ENCODE measurements at regions of chr22 and their contacts with region 1.

Region 1: GRCh38 chr22:37077884-37078485 is 26.4 kb downstream of the KCTD17 start:
- DNase-seq: no peak
- ATAC-seq: peak; percentile 91
- H3K4me3 ChIP-seq: no peak overlapping the region
- H3K27ac ChIP-seq: no peak overlapping the region
- H3K4me1 ChIP-seq: peaks cover 10% of the 10 kb centered on the region
- H3K27me3 ChIP-seq: peaks cover 0 to 3% of the 10 kb centered on the region in 2 experiments; a peak in 2 of 4 replicates
- CTCF ChIP-seq: peak; percentile 96 to 99 (median 98)
- EP300 ChIP-seq: no peak
- POLR2A ChIP-seq: no peak
- RAD21 ChIP-seq: peak; percentile 85

Region 2: GRCh38 chr22:36713436-36713835 is 364.5 kb before region 1 on chr22:
- CTCF ChIA-PET with region 1: no interaction called
- POLR2A ChIA-PET with region 1: no interaction called
- RAD21 ChIA-PET with region 1: no interaction called
- SMC1A ChIA-PET with region 1: no interaction called
- in situ Hi-C with region 1: no loop called
- intact Hi-C with region 1: no loop called
- DNase-seq: no peak
- ATAC-seq: no peak
- H3K4me3 ChIP-seq: no peak overlapping the region
- H3K27ac ChIP-seq: no peak overlapping the region
- H3K4me1 ChIP-seq: no peaks in the 10 kb centered on the region
- H3K27me3 ChIP-seq: peaks cover under 1 to 4% of the 10 kb centered on the region in 2 experiments
- CTCF ChIP-seq: no peak
- EP300 ChIP-seq: no peak
- POLR2A ChIP-seq: no peak
- RAD21 ChIP-seq: no peak

Region 3: DNA sequence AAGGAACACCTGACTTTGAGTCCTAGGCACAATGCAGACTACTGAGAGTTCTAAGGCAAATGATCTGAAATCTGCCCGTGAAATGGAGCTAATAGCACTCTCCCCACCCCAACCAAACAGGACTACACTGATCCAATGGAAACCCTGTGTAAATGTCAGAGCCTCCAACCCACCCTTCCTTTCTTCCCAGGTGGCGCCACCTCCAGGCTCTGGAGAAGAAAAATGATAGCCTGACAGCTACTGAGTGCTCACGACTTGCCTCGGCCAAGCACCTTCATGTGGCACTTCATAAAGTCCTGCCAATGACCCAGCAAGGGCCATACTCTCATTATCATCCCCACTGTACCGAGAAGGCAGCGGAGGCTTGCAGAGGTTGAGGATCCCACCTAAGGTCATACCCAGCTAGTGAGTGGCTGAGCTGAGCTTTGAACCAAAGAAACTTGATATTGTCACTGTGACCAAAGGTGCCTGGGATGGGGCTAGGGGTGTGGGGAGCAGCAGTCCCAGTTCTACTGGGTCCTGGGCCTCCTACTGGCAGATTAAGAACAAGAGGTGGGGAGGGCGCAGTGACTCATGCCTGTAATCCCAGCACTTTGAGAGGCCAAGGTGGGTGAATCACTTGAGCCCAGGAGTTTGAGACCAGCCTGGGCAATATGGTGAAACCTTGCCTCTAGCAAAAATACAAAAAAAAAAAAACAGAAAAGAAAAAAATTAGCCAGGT is 79.2 kb before region 1 on chr22:
- CTCF ChIA-PET with region 1: no interaction called
- POLR2A ChIA-PET with region 1: no interaction called
- RAD21 ChIA-PET with region 1: no interaction called
- SMC1A ChIA-PET with region 1: no interaction called
- in situ Hi-C with region 1: no loop called
- intact Hi-C with region 1: no loop called
- DNase-seq: no peak
- ATAC-seq: no peak
- H3K4me3 ChIP-seq: no peak overlapping the region
- H3K27ac ChIP-seq: no peak overlapping the region
- H3K4me1 ChIP-seq: no peaks in the 10 kb centered on the region
- H3K27me3 ChIP-seq: peaks cover 0 to 3% of the 10 kb centered on the region in 2 experiments; a peak in 2 of 4 replicates
- CTCF ChIP-seq: 0 out of 6 replicates have a peak, but pooled peaks of 1 of the 3 experiments have one; percentile 3
- EP300 ChIP-seq: no peak
- POLR2A ChIP-seq: no peak
- RAD21 ChIP-seq: 0 out of 2 replicates have a peak, but pooled peaks have one; percentile 9

Region 4: GRCh38 chr22:37186228-37186996 is 108.4 kb after region 1 on chr22:
- CTCF ChIA-PET with region 1: no interaction called
- POLR2A ChIA-PET with region 1: no interaction called
- RAD21 ChIA-PET with region 1: interaction called, 5 read pairs
- SMC1A ChIA-PET with region 1: interaction called, 5 read pairs
- in situ Hi-C with region 1: loop called (anchors 5 kb)
- intact Hi-C with region 1: no loop called
- DNase-seq: peak; percentile 55
- ATAC-seq: peak; percentile 90
- H3K4me3 ChIP-seq: no peak overlapping the region
- H3K27ac ChIP-seq: no peak overlapping the region
- H3K4me1 ChIP-seq: no peaks in the 10 kb centered on the region
- H3K27me3 ChIP-seq: no peaks in the 10 kb centered on the region
- CTCF ChIP-seq: no peak
- EP300 ChIP-seq: no peak
- POLR2A ChIP-seq: no peak
- RAD21 ChIP-seq: no peak

Measured in GM12878 (cell line).